Activated B cell treated with CpG ODN at 0.5 μM for 24 hours (primary cell): ENCODE measurements at regions of chr6 and their contacts with region 1.

Region 1: GRCh38 chr6:217048-217659 is 75.1 kb upstream of the DUSP22 start:
- DNase-seq: no peak
- ATAC-seq: no peak
- H3K4me3 Mint-ChIP-seq: peak overlapping the region; percentile 61
- H3K27ac Mint-ChIP-seq: peak overlapping the region; percentile 90
- H3K4me1 Mint-ChIP-seq: peaks cover 81% of the 10 kb centered on the region
- H3K27me3 Mint-ChIP-seq: no peaks in the 10 kb centered on the region
- CTCF ChIP-seq: no peak

Region 2: GRCh38 chr6:181049-181654 is 36.0 kb before region 1 on chr6:
- CTCF ChIA-PET with region 1: interaction called, 5 read pairs
- POLR2A ChIA-PET with region 1: interaction called, 16 read pairs
- intact Hi-C with region 1: no loop called
- DNase-seq: no peak
- ATAC-seq: peak; percentile 54
- H3K4me3 Mint-ChIP-seq: peak overlapping the region; percentile 60
- H3K27ac Mint-ChIP-seq: peak overlapping the region; percentile 74
- H3K4me1 Mint-ChIP-seq: peaks cover 66% of the 10 kb centered on the region
- H3K27me3 Mint-ChIP-seq: no peaks in the 10 kb centered on the region
- CTCF ChIP-seq: no peak

Region 3: DNA sequence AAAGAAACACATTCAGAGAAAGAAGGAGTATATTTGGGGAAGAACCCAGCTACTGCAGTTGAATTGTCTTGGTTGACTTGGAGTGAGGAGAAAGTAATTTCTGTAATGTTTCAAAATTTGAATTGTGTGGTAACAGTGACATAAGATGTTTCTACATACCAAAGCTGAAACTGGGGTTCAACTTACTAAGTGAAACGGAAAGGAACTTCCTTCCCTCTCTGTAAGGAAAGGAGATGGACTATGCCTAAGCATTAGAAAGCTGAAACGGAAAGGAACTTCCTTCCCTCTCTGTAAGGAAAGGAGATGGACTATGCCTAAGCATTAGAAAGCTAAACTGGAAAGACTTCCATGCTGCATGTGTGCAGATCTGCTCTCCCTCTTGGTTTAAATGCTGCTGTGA is 393.7 kb after region 1 on chr6:
- CTCF ChIA-PET with region 1: no interaction called
- POLR2A ChIA-PET with region 1: no interaction called
- intact Hi-C with region 1: no loop called
- DNase-seq: no peak
- ATAC-seq: no peak
- H3K4me3 Mint-ChIP-seq: peak overlapping the region; percentile 44
- H3K27ac Mint-ChIP-seq: no peak overlapping the region
- H3K4me1 Mint-ChIP-seq: peaks cover 13% of the 10 kb centered on the region
- H3K27me3 Mint-ChIP-seq: no peaks in the 10 kb centered on the region
- CTCF ChIP-seq: no peak

Region 4: DNA sequence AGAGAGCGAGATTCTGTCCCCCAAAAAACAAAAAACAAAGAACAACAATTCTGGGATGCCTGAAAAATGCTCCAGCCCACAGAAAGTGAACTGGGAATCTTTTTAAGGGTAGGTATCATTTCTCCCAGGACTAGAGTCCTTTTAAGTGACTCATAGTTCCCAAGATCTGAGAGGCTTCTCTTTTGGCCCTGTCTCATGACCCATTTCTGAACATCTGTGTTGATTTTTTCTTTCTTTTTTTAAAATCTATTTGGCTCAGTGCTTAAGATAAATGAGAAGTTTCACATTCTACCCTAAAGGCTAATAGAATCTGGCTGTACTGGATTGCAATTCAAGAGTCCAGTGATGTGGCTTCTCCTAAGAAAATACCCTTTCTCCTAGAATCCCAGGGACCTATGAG is 877.2 kb after region 1 on chr6:
- CTCF ChIA-PET with region 1: no interaction called
- POLR2A ChIA-PET with region 1: no interaction called
- intact Hi-C with region 1: no loop called
- DNase-seq: no peak
- ATAC-seq: no peak
- H3K4me3 Mint-ChIP-seq: no peak overlapping the region
- H3K27ac Mint-ChIP-seq: no peak overlapping the region
- H3K4me1 Mint-ChIP-seq: no peaks in the 10 kb centered on the region
- H3K27me3 Mint-ChIP-seq: peaks cover 10% of the 10 kb centered on the region
- CTCF ChIP-seq: no peak